Activated CD8-positive, alpha-beta T cell treated with anti-CD3 and anti-CD28 coated beads for 36 hours (primary cell): ENCODE measurements at regions of chr15 and their contacts with region 1.

Region 1: DNA sequence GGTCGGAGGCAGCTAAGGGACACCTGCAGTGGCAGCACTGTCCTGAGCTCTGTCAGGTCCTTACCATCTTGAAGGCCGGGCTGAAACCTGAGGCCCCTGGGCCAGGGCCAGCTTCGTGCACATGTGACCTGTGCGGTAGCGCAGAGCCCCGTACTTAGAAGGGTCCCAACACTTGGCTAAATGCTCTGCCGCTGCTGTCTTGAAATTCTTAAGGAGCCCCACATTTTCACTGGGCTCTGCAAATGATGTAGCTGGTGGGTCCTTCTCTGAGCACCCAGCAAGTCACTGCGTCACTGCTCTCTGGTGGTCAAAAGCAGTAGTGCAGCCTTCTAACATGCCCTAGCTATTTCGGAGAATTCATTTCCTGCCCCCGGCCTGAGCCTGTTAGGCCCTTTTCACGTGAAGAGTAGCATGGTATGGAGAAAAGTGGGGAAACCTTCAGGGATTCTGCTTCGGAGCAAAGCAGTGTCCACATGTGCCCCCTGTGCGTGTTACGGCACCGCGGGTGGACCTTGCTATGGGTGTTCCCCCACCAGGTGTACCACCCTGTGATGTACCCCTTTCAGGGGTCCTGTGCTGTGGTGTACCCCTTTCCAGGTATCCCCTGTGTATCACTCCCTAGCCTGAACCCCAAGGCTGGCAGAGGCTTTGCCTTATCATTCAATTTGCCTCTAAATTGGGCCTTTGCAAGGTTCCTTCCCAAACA is 79.7 kb downstream of the TMEM266 start:
- DNase-seq: peak; percentile 93
- ATAC-seq: peak; percentile 97
- H3K4me3 Mint-ChIP-seq: no peak overlapping the region
- H3K27ac Mint-ChIP-seq: no peak overlapping the region
- H3K4me1 Mint-ChIP-seq: peaks cover 11% of the 10 kb centered on the region
- H3K27me3 Mint-ChIP-seq: peaks cover 29% of the 10 kb centered on the region
- CTCF ChIP-seq: peak; percentile 94

Region 2: DNA sequence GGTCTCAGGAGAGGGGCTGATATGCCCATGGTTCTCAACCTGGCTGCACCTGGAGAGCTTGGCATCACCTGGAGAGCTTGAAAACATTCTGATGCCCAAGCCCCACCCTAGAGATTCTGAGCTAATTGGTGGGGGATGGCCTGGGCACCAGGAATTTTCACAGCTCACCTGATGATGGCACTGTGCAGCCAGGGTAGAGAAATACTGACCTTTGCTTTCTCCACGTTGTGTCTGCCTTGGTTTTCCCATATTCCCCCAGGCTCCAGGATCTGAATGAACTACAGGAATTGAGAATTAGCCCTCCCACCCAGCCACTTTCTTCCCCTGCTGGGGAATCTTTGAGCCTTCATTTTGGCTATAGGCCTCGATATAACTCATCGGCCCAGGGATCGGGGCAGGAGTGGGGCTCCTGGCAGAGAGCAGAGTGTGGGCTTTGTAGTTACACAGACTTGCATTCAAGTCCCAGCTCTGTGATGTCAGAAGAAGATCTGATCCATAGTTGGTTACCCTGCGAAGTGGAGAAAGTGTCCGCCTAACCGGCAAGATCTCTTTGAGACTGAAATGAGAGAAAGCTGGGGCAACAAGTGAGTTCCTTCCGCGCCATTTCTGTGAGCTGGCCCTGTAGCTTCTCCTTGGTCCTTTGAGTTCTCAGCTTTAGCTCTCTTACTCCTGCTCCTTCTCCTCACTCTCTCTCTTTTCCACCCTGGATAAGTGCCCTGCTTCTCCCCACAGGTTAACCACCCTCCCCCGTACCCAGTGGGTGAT is 329.4 kb before region 1 on chr15:
- CTCF ChIA-PET with region 1: interaction called, 10 read pairs
- POLR2A ChIA-PET with region 1: no interaction called
- intact Hi-C with region 1: loop called (anchors 10 kb)
- DNase-seq: peak; percentile 37
- ATAC-seq: peak; percentile 58
- H3K4me3 Mint-ChIP-seq: no peak overlapping the region
- H3K27ac Mint-ChIP-seq: no peak overlapping the region
- H3K4me1 Mint-ChIP-seq: peaks cover 4% of the 10 kb centered on the region
- H3K27me3 Mint-ChIP-seq: peaks cover 7% of the 10 kb centered on the region
- CTCF ChIP-seq: no peak

Region 3: GRCh38 chr15:76003364-76003763 is 136.2 kb before region 1 on chr15:
- CTCF ChIA-PET with region 1: no interaction called
- POLR2A ChIA-PET with region 1: no interaction called
- intact Hi-C with region 1: no loop called
- DNase-seq: no peak
- ATAC-seq: no peak
- H3K4me3 Mint-ChIP-seq: no peak overlapping the region
- H3K27ac Mint-ChIP-seq: no peak overlapping the region
- H3K4me1 Mint-ChIP-seq: no peaks in the 10 kb centered on the region
- H3K27me3 Mint-ChIP-seq: peaks cover 12% of the 10 kb centered on the region
- CTCF ChIP-seq: no peak

Region 4: DNA sequence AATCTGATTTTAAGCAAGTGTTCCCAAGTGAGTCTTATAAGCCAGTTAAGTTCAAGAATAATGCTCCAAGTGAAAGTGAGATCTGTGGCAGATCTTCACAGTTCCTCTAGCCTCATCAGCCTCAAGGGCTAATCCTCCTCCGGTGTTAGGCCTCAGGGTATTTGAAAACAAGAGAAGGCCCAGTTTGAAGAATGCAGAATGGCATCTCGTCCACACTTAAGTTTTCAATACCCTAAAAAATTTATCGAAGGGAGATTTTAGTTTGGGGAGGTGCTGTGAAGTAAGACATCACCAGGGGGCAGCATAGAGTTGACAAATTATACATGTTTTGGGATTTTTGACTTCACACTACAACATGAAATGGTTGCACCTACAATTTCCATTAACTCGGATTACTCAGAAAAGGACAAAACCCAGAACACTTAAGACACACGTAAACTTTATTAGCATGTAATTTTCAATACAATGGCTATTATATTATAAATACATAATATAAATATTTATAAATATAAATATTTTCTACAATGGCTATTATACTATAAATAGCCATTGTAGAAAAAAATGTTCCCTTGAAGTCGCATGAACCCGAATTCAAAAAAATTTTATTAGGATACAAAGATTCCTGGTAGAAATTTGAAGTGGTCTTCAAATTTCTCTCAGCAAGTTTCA is 82.1 kb before region 1 on chr15:
- CTCF ChIA-PET with region 1: interaction called, 294 read pairs
- POLR2A ChIA-PET with region 1: interaction called, 4 read pairs
- intact Hi-C with region 1: loop called (anchors 1 kb)
- DNase-seq: peak; percentile 70
- ATAC-seq: no peak
- H3K4me3 Mint-ChIP-seq: no peak overlapping the region
- H3K27ac Mint-ChIP-seq: no peak overlapping the region
- H3K4me1 Mint-ChIP-seq: peaks cover 43% of the 10 kb centered on the region
- H3K27me3 Mint-ChIP-seq: peaks cover 40% of the 10 kb centered on the region
- CTCF ChIP-seq: peak; percentile 88

Region 5: GRCh38 chr15:76073575-76073974 is 65.9 kb before region 1 on chr15:
- CTCF ChIA-PET with region 1: interaction called, 14 read pairs
- POLR2A ChIA-PET with region 1: no interaction called
- intact Hi-C with region 1: no loop called
- DNase-seq: no peak
- ATAC-seq: no peak
- H3K4me3 Mint-ChIP-seq: no peak overlapping the region
- H3K27ac Mint-ChIP-seq: no peak overlapping the region
- H3K4me1 Mint-ChIP-seq: no peaks in the 10 kb centered on the region
- H3K27me3 Mint-ChIP-seq: peaks cover 10% of the 10 kb centered on the region
- CTCF ChIP-seq: no peak

Region 6: DNA sequence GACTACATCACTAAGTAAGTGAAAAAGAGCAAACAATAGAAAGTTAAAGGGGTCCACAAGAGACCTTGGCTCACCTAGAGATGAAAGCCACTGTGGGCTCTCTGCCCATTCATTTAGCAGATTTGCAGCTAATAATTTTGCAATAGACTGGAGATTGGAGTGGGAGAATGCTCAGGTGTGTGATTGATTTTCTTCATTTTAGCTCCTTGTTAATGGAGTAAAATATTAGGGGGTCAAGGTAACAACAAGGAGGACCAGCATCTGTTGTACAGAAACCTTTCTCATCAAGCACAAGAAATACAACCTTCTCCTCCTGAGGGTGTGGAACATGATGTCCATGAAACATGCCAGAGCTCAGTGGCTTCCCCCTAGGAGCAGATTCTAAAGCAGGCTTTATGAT is 16.5 kb before region 1 on chr15:
- CTCF ChIA-PET with region 1: interaction called, 13 read pairs
- POLR2A ChIA-PET with region 1: no interaction called
- intact Hi-C with region 1: no loop called
- DNase-seq: no peak
- ATAC-seq: no peak
- H3K4me3 Mint-ChIP-seq: no peak overlapping the region
- H3K27ac Mint-ChIP-seq: no peak overlapping the region
- H3K4me1 Mint-ChIP-seq: no peaks in the 10 kb centered on the region
- H3K27me3 Mint-ChIP-seq: peaks cover 20% of the 10 kb centered on the region
- CTCF ChIP-seq: no peak

Region 7: DNA sequence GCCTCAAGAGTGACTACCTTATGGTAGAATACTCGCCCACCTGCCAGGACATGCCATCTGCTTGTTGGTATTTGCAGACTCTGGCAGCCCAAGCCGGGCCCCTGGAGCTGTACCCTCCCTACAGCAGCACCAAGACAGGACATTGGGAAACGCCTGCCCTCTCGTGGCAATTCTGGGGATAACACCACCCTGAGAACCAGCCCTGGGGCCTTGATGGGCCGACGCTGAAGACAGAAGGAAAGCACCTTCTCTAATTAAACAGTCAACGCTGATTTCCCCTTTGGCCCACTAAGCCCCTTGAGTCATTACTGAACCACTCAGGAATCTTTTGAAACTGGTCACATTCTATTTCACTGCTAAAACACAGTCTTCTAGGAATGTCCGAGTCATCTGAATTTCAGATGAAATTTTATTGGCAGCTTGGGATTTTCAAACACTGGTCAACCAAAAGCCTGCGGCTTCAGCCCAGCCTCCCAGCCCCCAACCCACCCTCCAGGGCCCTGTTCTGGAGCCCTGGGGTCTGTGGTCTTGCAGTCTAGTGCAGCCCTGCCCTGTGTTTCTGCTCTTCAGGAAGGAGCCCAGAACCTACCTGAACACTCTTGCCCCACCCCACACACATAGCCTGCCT is 11.6 kb after region 1 on chr15:
- CTCF ChIA-PET with region 1: interaction called, 111 read pairs
- POLR2A ChIA-PET with region 1: interaction called, 4 read pairs
- intact Hi-C with region 1: no loop called
- DNase-seq: peak; percentile 93
- ATAC-seq: peak; percentile 97
- H3K4me3 Mint-ChIP-seq: no peak overlapping the region
- H3K27ac Mint-ChIP-seq: peak overlapping the region; percentile 25
- H3K4me1 Mint-ChIP-seq: peaks cover 32% of the 10 kb centered on the region
- H3K27me3 Mint-ChIP-seq: peaks cover 9% of the 10 kb centered on the region
- CTCF ChIP-seq: peak; percentile 83

Region 8: DNA sequence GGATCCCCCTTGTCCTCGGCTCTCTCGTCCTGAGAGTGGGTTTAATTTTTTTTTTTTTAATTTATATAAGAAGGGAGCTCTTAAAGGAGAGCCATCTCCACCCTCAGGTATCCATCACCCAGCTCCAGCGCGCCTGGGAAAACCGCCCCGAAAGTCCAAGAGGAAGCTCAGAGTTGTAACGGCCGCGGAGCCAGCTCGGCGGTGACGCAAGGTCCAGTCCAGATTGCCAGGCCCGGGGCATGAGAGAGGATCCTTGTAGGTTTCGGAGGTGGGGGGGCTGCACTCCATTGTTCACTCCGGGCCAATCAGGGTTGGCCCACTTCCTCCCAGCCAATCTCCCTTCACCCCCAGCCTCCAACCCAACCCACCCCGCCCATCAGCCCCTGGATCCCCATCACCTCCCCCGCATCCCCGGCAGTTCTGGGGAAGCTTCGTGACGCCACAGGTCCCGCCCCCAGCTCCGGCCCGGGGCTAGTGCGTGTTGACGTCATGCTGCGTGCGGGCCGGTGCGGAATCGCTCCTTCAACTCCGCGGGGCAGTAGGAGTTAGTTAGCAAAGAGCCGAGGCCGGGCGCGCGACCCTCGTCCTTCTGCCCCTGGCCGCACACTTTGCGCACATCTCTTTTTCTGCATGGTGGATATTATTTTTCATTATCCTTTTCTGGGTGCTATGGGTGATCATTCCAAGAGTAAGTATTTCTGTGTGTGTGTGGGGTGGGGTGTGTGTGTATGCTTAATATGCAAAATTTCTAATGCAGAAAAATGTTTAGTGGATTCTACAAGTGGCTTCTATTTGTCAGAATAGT is 196.9 kb after region 1 on chr15 and contains the start of gene ISL2:
- CTCF ChIA-PET with region 1: no interaction called
- POLR2A ChIA-PET with region 1: no interaction called
- intact Hi-C with region 1: no loop called
- DNase-seq: peak; percentile 85
- ATAC-seq: peak; percentile 61
- H3K4me3 Mint-ChIP-seq: peak within 1 kb of the TSS; percentile 66
- H3K27ac Mint-ChIP-seq: peak within 1 kb of the TSS; percentile 14
- H3K4me1 Mint-ChIP-seq: peaks cover 42% of the 10 kb centered on the region
- H3K27me3 Mint-ChIP-seq: peaks cover 71% of the 10 kb centered on the region
- CTCF ChIP-seq: no peak
- total RNA-seq, gene ISL2: 0.22 TPM in 1 of 2 experiments, not detected in the other